Activated CD4-positive, alpha-beta T cell treated with anti-CD3 and anti-CD28 coated beads, Interleukin-2, amount 10 ng/mL, durations not matched to agents 24 days and 14 days (primary cell): ENCODE measurements at regions of chr4 and their contacts with region 1.

Region 1: GRCh38 chr4:141636082-141636770 is at the start of gene IL15:
- DNase-seq: peak; percentile 92
- H3K4me3 Mint-ChIP-seq: peak within 1 kb of the TSS; percentile 98
- H3K27ac Mint-ChIP-seq: peak within 1 kb of the TSS; percentile 80
- H3K4me1 Mint-ChIP-seq: peaks cover 15% of the 10 kb centered on the region
- H3K27me3 Mint-ChIP-seq: peaks cover 24% of the 10 kb centered on the region
- total RNA-seq, gene IL15: 0.86 and 0.92 TPM in 2 replicates

Region 2: DNA sequence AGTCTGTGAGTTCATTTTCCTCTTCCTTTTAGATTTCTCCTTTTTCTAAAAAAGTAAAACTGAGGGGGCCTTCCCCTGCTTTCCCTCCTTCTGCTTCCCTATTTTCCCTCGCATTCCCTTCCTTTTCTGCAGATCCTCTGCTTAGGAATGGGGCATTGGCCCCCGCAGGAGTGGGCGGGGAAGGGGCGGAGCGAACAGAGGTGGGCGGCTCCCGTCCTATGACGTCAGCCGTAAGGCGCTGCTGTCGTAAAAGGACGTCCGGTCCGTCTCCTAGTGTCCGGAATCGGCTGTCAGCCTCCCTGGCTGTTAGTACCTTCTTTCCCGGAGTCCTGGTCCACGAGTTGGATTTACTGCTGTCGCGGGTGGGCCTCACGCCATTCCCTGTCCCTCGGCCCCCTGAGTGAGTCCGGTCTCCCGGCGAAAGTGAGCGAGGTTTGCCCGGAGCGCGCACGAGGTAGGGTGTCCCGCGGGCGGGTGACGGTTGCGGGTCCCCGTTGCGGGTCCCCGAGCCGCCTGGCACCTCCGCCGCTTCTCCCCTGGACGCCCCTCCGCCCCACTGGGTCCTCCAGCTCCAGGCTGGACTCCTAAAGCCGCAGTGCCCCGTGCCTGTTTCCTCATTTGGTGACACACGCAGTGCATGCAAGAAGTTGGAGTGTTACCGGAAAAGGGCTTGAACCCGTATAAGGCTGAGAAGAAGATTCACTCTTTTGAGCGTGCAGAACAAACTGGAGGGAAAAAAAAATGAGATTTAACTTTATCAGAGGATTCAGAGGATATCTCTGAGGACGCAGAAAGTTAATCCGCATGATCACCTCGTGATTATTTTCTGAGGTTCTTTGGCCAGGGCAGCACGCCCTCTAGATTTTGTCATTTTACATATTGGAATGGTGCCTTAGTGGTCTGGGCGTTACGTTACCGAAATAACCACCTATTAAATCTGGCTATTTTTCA is 415.3 kb before region 1 on chr4 and contains the start of gene ZNF330:
- intact Hi-C with region 1: loop called (anchors 5 kb)
- DNase-seq: peak; percentile 97
- H3K4me3 Mint-ChIP-seq: peak within 1 kb of the TSS; percentile 95
- H3K27ac Mint-ChIP-seq: peak within 1 kb of the TSS; percentile 98
- H3K4me1 Mint-ChIP-seq: peaks cover 37% of the 10 kb centered on the region
- H3K27me3 Mint-ChIP-seq: peaks cover 4% of the 10 kb centered on the region
- total RNA-seq, gene ZNF330: 60.2 and 64.6 TPM in 2 replicates

Region 3: GRCh38 chr4:141771889-141772830 is 135.9 kb after region 1 on chr4:
- intact Hi-C with region 1: loop called (anchors 10 kb)
- DNase-seq: peak; percentile 63
- H3K4me3 Mint-ChIP-seq: no peak overlapping the region
- H3K27ac Mint-ChIP-seq: no peak overlapping the region
- H3K4me1 Mint-ChIP-seq: peaks cover 11% of the 10 kb centered on the region
- H3K27me3 Mint-ChIP-seq: peaks cover 8% of the 10 kb centered on the region